ENCODE measurements at regions of chr10 and their contacts with region 1.

Region 1: GRCh38 chr10:110414563-110415309 is 83.0 kb upstream of the DUSP5 start:
- DNase-seq: peak; percentile 86 to 95
- ATAC-seq: peak; percentile 89 to 96 (median 94)
- H3K4me3 ChIP-seq: no peak overlapping the region
- H3K4me3 Mint-ChIP-seq: peak overlapping the region; percentile 70
- H3K27ac ChIP-seq: peak overlapping the region; percentile 52
- H3K27ac Mint-ChIP-seq: peak overlapping the region; percentile 88 to 89
- H3K4me1 ChIP-seq: peaks cover 62% of the 10 kb centered on the region
- H3K4me1 Mint-ChIP-seq: peaks cover 54 to 63% of the 10 kb centered on the region in 2 donors
- H3K27me3 ChIP-seq: no peaks in the 10 kb centered on the region
- H3K27me3 Mint-ChIP-seq: peaks cover 0 to 10% of the 10 kb centered on the region in 2 donors
- CTCF ChIP-seq: no peak

Region 2: DNA sequence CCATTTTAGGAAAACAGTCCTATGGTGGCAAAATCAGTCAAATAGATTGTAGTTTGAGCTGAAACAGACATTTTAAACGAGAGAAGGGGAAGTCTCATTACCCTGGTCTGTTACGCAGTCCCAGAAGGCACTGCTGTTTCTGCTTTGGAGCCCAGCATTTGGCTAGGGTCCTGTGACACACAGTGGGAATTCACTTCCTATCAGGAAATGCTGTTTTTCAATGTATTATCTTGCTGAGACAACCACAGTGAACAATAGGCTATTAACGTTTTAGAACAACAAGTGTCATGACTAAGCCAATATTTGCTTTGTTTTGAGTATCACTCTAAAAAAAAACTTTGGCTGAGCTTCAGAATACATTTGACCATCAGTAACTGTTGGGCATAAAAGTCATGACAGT is 332.8 kb before region 1 on chr10:
- intact Hi-C with region 1: loop called (anchors 10 kb)
- DNase-seq: peak in 1 of 2 donors; percentile 42
- ATAC-seq: no peak
- H3K4me3 ChIP-seq: no peak overlapping the region
- H3K4me3 Mint-ChIP-seq: peak overlapping the region; percentile 53
- H3K27ac ChIP-seq: peak overlapping the region; percentile 22
- H3K27ac Mint-ChIP-seq: peak overlapping the region; percentile 95 to 98
- H3K4me1 ChIP-seq: peaks cover 37% of the 10 kb centered on the region
- H3K4me1 Mint-ChIP-seq: peaks cover 90 to 92% of the 10 kb centered on the region in 2 donors
- H3K27me3 ChIP-seq: no peaks in the 10 kb centered on the region
- H3K27me3 Mint-ChIP-seq: no peaks in the 10 kb centered on the region
- CTCF ChIP-seq: no peak

Region 3: GRCh38 chr10:110311357-110311949 is 103.3 kb before region 1 on chr10:
- intact Hi-C with region 1: no loop called
- DNase-seq: peak in 1 of 2 donors; percentile 76
- ATAC-seq: peak in 2 of 3 donors; percentile 75 to 76
- H3K4me3 ChIP-seq: no peak overlapping the region
- H3K4me3 Mint-ChIP-seq: no peak overlapping the region
- H3K27ac ChIP-seq: no peak overlapping the region
- H3K27ac Mint-ChIP-seq: no peak overlapping the region
- H3K4me1 ChIP-seq: no peaks in the 10 kb centered on the region
- H3K4me1 Mint-ChIP-seq: no peaks in the 10 kb centered on the region
- H3K27me3 ChIP-seq: no peaks in the 10 kb centered on the region
- H3K27me3 Mint-ChIP-seq: peaks cover 4 to 18% of the 10 kb centered on the region in 2 donors
- CTCF ChIP-seq: peak; percentile 34

Region 4: DNA sequence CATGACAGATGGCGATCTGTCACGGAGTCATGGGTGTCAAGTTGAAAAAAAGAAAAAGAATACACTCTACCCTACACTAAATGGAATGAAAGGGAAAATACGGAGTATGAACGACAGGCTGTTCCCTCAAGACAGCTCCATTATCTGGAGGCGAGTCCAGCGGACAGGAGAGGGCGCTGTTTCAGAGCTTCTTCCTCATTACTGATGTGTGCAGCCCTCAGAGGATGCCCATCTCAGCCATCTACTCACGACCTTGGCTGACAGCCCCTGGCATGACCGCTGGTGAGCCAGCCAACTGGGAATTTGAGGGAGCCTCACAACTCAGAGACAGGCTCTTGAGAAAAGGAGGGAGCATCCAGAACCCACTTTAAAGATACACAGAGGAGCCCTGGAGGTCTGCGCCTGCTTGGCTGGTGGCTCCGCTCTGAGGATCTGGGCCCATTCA is 60.4 kb before region 1 on chr10:
- intact Hi-C with region 1: loop called (anchors 2 kb)
- DNase-seq: peak; percentile 76 to 87
- ATAC-seq: peak; percentile 76 to 91 (median 86)
- H3K4me3 ChIP-seq: no peak overlapping the region
- H3K4me3 Mint-ChIP-seq: no peak overlapping the region
- H3K27ac ChIP-seq: no peak overlapping the region
- H3K27ac Mint-ChIP-seq: peak overlapping the region in 1 of 2 donors; percentile 29
- H3K4me1 ChIP-seq: peaks cover 52% of the 10 kb centered on the region
- H3K4me1 Mint-ChIP-seq: peaks cover 13 to 21% of the 10 kb centered on the region in 2 donors
- H3K27me3 ChIP-seq: no peaks in the 10 kb centered on the region
- H3K27me3 Mint-ChIP-seq: peaks cover 8 to 13% of the 10 kb centered on the region in 2 donors
- CTCF ChIP-seq: peak; percentile 93

Region 5: DNA sequence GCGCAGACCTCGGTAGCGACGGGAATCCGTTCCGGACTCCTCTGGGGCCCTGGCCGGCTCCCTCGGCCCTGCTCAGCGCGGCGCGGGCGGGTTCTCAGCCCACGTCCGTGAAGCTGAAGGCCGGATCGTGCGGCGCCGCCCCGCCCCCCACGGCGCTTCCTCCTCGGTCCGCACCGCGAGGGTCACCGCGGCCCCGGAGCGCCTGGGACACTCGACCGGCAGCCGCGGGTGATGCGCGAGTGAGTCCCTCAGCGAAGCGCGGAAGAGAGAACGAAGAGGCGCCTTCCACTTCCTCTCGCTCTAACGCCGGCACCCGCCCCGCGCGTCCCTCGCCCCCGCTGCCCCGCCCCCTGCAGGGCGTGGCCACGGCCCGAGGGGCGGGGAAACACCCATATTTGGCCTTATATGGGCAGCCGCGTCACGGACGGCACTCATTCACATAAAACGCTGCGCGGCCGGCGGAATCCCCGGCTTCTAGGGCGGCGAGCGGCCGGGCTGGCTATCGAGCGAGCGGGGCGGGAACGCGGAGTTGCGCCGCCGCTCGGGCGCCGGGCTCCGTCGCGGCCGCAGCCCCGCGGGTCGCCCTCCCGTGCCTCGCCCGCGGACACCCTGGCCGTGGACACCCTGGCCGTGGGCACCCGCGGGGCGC is 82.8 kb after region 1 on chr10 and contains the start of gene DUSP5:
- intact Hi-C with region 1: loop called (anchors 1 kb)
- DNase-seq: peak; percentile 98 to 99
- ATAC-seq: peak; percentile 88 to 97 (median 89)
- H3K4me3 ChIP-seq: peak within 1 kb of the TSS; percentile 66
- H3K4me3 Mint-ChIP-seq: peak within 1 kb of the TSS; percentile 97
- H3K27ac ChIP-seq: peak within 1 kb of the TSS; percentile 72
- H3K27ac Mint-ChIP-seq: peak within 1 kb of the TSS; percentile 96
- H3K4me1 ChIP-seq: peaks cover 53% of the 10 kb centered on the region
- H3K4me1 Mint-ChIP-seq: peaks cover 59 to 72% of the 10 kb centered on the region in 2 donors
- H3K27me3 ChIP-seq: no peaks in the 10 kb centered on the region
- H3K27me3 Mint-ChIP-seq: no peaks in the 10 kb centered on the region
- CTCF ChIP-seq: no peak
- total RNA-seq, gene DUSP5: 56.3 to 98.9 (median 69.6) TPM

Measured in natural killer cell (primary cell).